ENCODE measurements at regions of chr7 and their contacts with region 1.

Region 1: DNA sequence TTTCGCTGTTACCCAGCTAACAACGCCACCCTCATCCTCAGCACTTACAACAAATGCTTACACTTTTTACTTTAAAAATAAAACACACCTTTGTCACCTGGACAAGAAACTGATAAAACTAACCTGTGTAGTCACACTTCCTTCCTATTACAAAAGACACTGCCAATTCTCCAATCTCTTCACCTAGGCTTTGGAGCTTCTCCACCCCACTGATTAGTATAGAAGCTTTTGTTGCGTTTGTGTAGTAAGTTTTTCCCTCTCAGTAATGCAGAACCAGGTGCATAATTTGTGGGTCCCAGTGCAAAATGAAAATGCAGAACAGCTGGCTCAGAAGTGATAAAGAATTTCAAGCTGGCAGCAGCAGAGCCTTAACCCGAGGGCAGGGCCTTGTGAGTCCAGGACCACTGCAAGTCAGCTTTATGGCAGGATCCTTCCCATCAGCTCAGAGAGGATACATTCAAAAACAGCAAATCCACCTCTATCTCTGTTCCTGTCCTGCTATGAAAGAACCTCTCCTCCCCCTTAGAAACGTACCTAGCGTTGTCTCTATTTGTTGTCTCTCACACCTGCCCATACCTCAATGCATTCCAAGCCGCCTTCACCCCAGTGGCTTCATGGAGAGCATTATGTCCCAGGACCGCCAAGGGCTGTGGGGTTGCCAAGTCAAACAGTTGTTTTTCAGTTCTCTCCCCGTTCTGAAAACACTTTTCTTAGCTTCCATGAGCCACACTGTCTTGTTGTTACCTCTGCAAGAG is 40.3 kb upstream of the EGFR start:
- DNase-seq: no peak
- H3K4me3 ChIP-seq: no peak overlapping the region
- H3K27ac ChIP-seq: no peak overlapping the region
- H3K4me1 ChIP-seq: no peaks in the 10 kb centered on the region
- CTCF ChIP-seq: no peak

Region 2: DNA sequence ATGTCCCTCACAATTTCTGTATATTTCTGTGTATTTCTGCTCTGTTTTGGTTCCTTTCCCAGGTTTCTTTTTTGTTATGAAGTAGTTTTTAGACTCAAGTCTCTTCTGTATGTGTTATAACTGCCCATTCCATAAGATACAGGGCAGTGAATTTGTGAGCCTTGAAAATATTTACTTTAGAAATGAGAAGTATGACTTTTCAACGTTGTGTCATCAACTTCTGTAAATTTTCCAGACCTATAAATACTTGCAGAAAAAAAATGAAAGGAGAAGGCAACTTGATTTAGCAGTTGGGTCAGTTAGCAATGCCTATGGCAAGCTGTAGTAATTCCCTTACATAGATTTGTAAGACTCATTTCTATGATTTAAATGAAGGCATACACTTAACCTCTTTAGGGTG is 51.8 kb after region 1 on chr7:
- CTCF ChIA-PET with region 1: no interaction called
- POLR2A ChIA-PET with region 1: no interaction called
- intact Hi-C with region 1: loop called (anchors 10 kb)
- DNase-seq: no peak
- H3K4me3 ChIP-seq: no peak overlapping the region
- H3K27ac ChIP-seq: no peak overlapping the region
- H3K4me1 ChIP-seq: no peaks in the 10 kb centered on the region
- CTCF ChIP-seq: no peak

Region 3: GRCh38 chr7:55065079-55065478 is 86.5 kb after region 1 on chr7:
- CTCF ChIA-PET with region 1: no interaction called
- POLR2A ChIA-PET with region 1: interaction called, 12 read pairs
- intact Hi-C with region 1: no loop called
- DNase-seq: no peak
- H3K4me3 ChIP-seq: no peak overlapping the region
- H3K27ac ChIP-seq: no peak overlapping the region
- H3K4me1 ChIP-seq: no peaks in the 10 kb centered on the region
- CTCF ChIP-seq: no peak